ENCODE measurements at regions of chr6 and their contacts with region 1.

Region 1: GRCh38 chr6:134174672-134175198 is 122.3 kb upstream of the SLC2A12 start:
- DNase-seq: peak; percentile 89 to 99 (median 98)

Region 2: GRCh38 chr6:133817460-133818047 is 357.2 kb before region 1 on chr6:
- intact Hi-C with region 1: no loop called
- DNase-seq: peak in 1 of 42 donors; percentile 19

Region 3: GRCh38 chr6:134029495-134030455 is 145.0 kb before region 1 on chr6:
- intact Hi-C with region 1: no loop called
- DNase-seq: no peak

Region 4: DNA sequence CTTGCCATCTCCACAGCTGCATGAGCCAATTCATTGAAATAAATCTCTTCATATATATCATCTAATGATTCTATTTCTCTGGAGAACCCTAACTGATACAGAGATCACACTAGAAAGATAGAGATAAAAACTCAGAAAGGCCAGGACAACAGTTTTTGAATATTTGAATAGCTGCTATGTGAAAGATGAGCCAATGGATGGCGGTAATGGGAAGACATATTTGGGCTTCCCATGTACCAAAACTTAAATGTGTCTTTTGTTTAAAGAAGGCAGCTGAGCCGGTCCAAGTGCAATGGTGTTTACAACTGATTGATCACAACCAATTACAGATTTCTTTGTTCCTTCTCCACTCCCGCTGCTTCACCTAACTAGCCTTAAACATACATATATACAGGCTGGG is 108.1 kb after region 1 on chr6:
- intact Hi-C with region 1: no loop called
- DNase-seq: peak in 1 of 42 donors; percentile 41

Region 5: GRCh38 chr6:134317471-134318131 is 142.9 kb after region 1 on chr6 and contains the start of gene SGK1:
- intact Hi-C with region 1: loop called (anchors 2 kb)
- DNase-seq: peak; percentile 55 to 93 (median 78)

Region 6: DNA sequence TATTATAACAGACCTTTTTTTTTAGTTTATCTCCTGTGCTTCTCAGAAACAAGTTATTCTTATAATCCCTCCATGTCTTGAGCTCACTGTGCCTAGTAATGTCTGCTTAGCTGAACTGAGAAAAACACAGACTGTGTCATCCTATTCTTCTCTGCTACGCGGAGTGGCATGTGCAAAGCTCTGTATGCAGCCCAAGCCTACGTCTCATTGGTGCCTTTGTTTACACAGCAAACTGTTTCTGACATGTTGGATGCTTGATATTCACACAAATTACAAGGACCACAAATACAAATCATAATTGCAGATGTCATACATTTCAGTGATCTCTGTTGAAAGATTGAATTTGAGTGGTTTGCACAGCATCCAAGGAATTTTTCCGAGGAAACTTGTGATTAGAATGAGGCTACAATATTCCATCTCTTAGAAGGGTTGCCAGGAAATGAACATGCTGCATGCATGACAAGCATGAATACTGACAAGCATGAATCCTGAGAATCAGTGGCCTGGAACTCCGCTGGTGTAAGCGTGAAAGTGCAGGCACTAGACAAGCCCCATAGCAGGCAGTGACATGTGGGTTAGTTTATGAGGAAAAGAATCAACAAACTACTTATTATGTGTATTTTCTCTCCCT is 271.6 kb after region 1 on chr6:
- intact Hi-C with region 1: loop called (anchors 10 kb)
- DNase-seq: peak in 27 of 42 donors; percentile 21 to 79 (median 53)

Region 7: GRCh38 chr6:134564705-134565104 is 390.0 kb after region 1 on chr6:
- intact Hi-C with region 1: loop called (anchors 10 kb)
- DNase-seq: peak; percentile 28 to 95 (median 80)

Region 8: DNA sequence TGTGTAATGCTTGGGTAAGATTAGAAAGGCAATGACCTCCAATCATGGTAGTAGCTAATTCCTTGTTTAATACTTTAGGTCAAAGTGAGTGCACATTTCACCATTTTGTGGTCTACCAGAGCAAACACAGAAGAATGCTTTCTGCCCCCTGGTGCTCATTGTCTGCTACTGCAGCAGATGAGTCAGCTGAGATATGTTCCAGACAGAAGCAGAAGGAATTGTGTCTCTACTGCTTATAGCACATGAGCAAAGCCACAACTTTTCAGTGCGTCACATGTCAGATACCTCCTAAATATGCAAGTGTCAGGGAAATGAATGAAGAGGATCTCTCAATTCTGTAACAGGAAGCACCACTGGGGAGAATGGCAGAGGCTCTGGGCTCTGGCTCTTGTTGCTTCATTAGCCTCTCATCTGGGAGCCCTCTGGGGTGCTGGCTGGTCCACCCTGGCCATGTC is 466.3 kb after region 1 on chr6:
- intact Hi-C with region 1: loop called (anchors 5 kb)
- DNase-seq: peak; percentile 26 to 93 (median 84)

Region 9: GRCh38 chr6:134822920-134823709 is 648.4 kb after region 1 on chr6:
- intact Hi-C with region 1: loop called (anchors 5 kb)
- DNase-seq: peak in 39 of 42 donors; percentile 7 to 86 (median 48)

Region 10: GRCh38 chr6:134938896-134939295 is 764.2 kb after region 1 on chr6:
- intact Hi-C with region 1: loop called (anchors 10 kb)
- DNase-seq: no peak

Measured in head of caudate nucleus (tissue), 42 donors.